CD8-positive, alpha-beta T cell (primary cell): ENCODE measurements at regions of chrX and their contacts with region 1.

Region 1: GRCh38 chrX:101415180-101416145 is 7.4 kb downstream of the HNRNPH2 start:
- DNase-seq: peak in 5 of 9 experiments; percentile 11 to 83 (median 38)
- ATAC-seq: peak; percentile 79
- H3K4me3 ChIP-seq: no peak overlapping the region
- H3K4me3 Mint-ChIP-seq: peak overlapping the region; percentile 55
- H3K27ac ChIP-seq: peak overlapping the region in 1 of 2 experiments; percentile 70
- H3K27ac Mint-ChIP-seq: peak overlapping the region; percentile 85
- H3K4me1 ChIP-seq: peaks cover 22% of the 10 kb centered on the region
- H3K4me1 Mint-ChIP-seq: peaks cover 59% of the 10 kb centered on the region
- H3K27me3 ChIP-seq: no peaks in the 10 kb centered on the region
- H3K27me3 Mint-ChIP-seq: no peaks in the 10 kb centered on the region
- CTCF ChIP-seq: peak; percentile 57

Region 2: DNA sequence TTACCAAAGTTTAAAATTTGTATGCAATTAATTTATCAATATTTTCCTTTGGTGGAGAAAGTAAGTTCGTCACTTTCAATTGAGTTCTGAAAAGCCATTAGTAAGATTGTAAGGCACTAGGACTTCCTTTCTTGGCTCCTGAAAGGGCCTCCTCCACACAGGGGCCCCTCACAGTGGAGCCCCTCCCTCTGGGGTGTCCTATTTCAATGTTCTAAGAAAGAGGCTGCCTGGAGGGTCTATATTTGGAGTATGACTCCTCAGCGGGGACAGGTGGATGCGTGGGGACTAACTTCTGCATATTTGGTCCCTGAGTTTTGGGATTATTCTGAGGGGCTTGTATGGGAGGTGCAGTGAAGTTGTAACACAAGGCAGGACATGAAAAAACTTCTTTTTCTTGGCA is 68.2 kb after region 1 on chrX:
- CTCF ChIA-PET with region 1: no interaction called
- POLR2A ChIA-PET with region 1: no interaction called
- intact Hi-C with region 1: loop called in 1 of 2 experiments (anchors 5 kb)
- DNase-seq: no peak
- ATAC-seq: no peak
- H3K4me3 ChIP-seq: no peak overlapping the region
- H3K4me3 Mint-ChIP-seq: no peak overlapping the region
- H3K27ac ChIP-seq: no peak overlapping the region
- H3K27ac Mint-ChIP-seq: no peak overlapping the region
- H3K4me1 ChIP-seq: peaks cover 3% of the 10 kb centered on the region
- H3K4me1 Mint-ChIP-seq: peaks cover 13% of the 10 kb centered on the region
- H3K27me3 ChIP-seq: no peaks in the 10 kb centered on the region
- H3K27me3 Mint-ChIP-seq: no peaks in the 10 kb centered on the region
- CTCF ChIP-seq: no peak

Region 3: GRCh38 chrX:101759000-101759399 is 343.5 kb after region 1 on chrX:
- CTCF ChIA-PET with region 1: interaction called, 12 read pairs
- POLR2A ChIA-PET with region 1: no interaction called
- intact Hi-C with region 1: loop called (anchors 1 to 5 kb)
- DNase-seq: peak in 5 of 9 experiments; percentile 10 to 59 (median 18)
- ATAC-seq: peak; percentile 57
- H3K4me3 ChIP-seq: no peak overlapping the region
- H3K4me3 Mint-ChIP-seq: no peak overlapping the region
- H3K27ac ChIP-seq: no peak overlapping the region
- H3K27ac Mint-ChIP-seq: no peak overlapping the region
- H3K4me1 ChIP-seq: no peaks in the 10 kb centered on the region
- H3K4me1 Mint-ChIP-seq: peaks cover 2% of the 10 kb centered on the region
- H3K27me3 ChIP-seq: no peaks in the 10 kb centered on the region
- H3K27me3 Mint-ChIP-seq: peaks cover 2% of the 10 kb centered on the region
- CTCF ChIP-seq: peak; percentile 46

Region 4: GRCh38 chrX:102085706-102086105 is 670.2 kb after region 1 on chrX:
- CTCF ChIA-PET with region 1: no interaction called
- POLR2A ChIA-PET with region 1: no interaction called
- intact Hi-C with region 1: loop called in 1 of 2 experiments (anchors 2 kb)
- DNase-seq: peak in 2 of 9 experiments; percentile 1 to 7
- ATAC-seq: no peak
- H3K4me3 ChIP-seq: no peak overlapping the region
- H3K4me3 Mint-ChIP-seq: no peak overlapping the region
- H3K27ac ChIP-seq: no peak overlapping the region
- H3K27ac Mint-ChIP-seq: no peak overlapping the region
- H3K4me1 ChIP-seq: no peaks in the 10 kb centered on the region
- H3K4me1 Mint-ChIP-seq: no peaks in the 10 kb centered on the region
- H3K27me3 ChIP-seq: no peaks in the 10 kb centered on the region
- H3K27me3 Mint-ChIP-seq: peaks cover 12% of the 10 kb centered on the region
- CTCF ChIP-seq: no peak

Region 5: DNA sequence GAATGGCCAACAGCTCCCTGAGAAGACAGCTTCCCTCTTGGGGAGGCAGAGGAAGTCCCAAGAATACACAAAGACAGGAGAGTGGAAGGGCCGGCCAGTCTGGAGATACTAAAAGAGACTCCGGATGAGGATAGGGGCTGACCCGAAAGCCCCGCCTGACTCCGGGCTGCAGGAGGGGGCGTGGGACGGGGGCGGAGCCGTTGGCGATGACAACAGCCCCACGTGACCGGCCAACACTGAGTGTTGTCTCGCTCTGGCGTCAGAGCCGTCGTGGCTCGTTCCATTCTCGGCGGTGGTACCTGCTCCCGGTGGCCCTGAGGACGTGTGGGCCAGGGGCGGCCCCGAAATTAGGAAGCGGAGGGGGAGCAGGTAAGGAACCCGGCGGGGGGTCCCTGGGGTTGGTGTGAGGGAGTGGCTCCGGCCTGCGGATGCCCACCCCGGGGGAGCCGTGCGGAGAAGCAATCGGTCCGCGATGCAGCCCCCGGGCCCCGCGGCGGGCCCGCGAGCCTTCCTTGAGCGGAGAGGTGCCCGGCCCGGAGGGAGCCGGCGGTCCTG is 1799.5 kb after region 1 on chrX and contains the start of gene BEX4:
- CTCF ChIA-PET with region 1: no interaction called
- POLR2A ChIA-PET with region 1: no interaction called
- intact Hi-C with region 1: loop called in 1 of 2 experiments (anchors 10 kb)
- DNase-seq: peak; percentile 68 to 89 (median 80)
- ATAC-seq: peak; percentile 90
- H3K4me3 ChIP-seq: peak within 1 kb of the TSS; percentile 63 to 68
- H3K4me3 Mint-ChIP-seq: peak within 1 kb of the TSS; percentile 87
- H3K27ac ChIP-seq: peak within 1 kb of the TSS; percentile 84 to 96
- H3K27ac Mint-ChIP-seq: peak within 1 kb of the TSS; percentile 93
- H3K4me1 ChIP-seq: peaks cover 8% of the 10 kb centered on the region
- H3K4me1 Mint-ChIP-seq: peaks cover 16% of the 10 kb centered on the region
- H3K27me3 ChIP-seq: no peaks in the 10 kb centered on the region
- H3K27me3 Mint-ChIP-seq: no peaks in the 10 kb centered on the region
- CTCF ChIP-seq: no peak
- total RNA-seq, gene BEX4: 50.6 to 54.3 TPM